WTC11 (cell line): ENCODE measurements at regions of chr12 and their contacts with region 1.

Region 1: GRCh38 chr12:6195665-6196535 is 4.3 kb upstream of the CD9 start:
- DNase-seq: peak; percentile 95
- ATAC-seq: peak; percentile 60
- H3K4me3 Mint-ChIP-seq: no peak overlapping the region
- H3K27ac Mint-ChIP-seq: peak overlapping the region; percentile 79
- H3K4me1 Mint-ChIP-seq: peaks cover 63% of the 10 kb centered on the region
- H3K27me3 Mint-ChIP-seq: peaks cover 7% of the 10 kb centered on the region; the same call in 1 of the 2 replicates
- CTCF ChIP-seq: peak; percentile 99

Region 2: DNA sequence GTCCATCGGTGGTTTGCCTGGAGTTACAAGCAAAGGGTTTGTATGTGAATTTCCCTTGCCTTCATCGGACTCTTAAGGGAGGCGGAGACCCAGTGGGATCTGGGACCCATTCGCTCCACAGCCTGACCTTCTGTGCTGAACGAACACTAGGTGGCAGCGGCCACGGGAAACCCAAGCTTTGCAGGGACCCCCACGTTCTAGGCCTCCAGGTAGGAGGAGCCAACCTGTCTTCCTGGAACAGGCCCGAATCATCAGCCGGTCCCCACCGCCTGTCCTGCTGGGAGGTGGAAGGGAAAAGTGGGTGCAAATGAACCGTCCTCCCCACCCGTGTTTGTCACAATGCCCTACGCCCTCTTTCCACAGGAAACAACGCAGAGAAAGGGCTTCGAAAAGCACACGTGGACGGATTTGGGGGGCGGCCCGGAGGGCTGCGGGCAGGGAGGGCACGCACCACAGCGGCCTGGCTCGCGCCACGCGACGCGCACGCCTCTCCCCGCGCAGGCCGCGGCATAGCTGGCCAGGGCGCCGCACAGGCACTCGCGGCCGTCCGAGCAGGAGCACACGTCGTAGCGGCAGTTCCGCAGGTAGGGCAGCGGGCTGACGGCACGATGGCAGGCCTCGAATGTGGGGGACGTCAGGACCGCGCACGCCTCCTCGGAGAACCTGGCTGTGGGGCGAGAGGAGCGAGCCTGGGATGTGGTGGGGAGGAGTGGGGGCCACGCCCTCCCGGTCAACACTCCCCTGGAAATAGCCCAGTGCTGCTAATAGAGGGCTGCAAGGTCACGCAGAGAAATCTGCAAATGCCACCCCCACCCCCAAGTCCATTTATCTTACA is 139.3 kb before region 1 on chr12:
- CTCF ChIA-PET with region 1: interaction called, 19 read pairs
- POLR2A ChIA-PET with region 1: interaction called, 4 read pairs
- DNase-seq: peak; percentile 70
- ATAC-seq: peak; percentile 79
- H3K4me3 Mint-ChIP-seq: peak overlapping the region; percentile 59
- H3K27ac Mint-ChIP-seq: no peak overlapping the region
- H3K4me1 Mint-ChIP-seq: peaks cover 29% of the 10 kb centered on the region
- H3K27me3 Mint-ChIP-seq: peaks cover 6% of the 10 kb centered on the region
- CTCF ChIP-seq: no peak

Region 3: GRCh38 chr12:6116175-6117021 is 79.5 kb before region 1 on chr12:
- CTCF ChIA-PET with region 1: no interaction called
- POLR2A ChIA-PET with region 1: no interaction called
- DNase-seq: no peak
- ATAC-seq: peak; percentile 32; the same call in 1 of the 2 replicates
- H3K4me3 Mint-ChIP-seq: no peak overlapping the region
- H3K27ac Mint-ChIP-seq: no peak overlapping the region
- H3K4me1 Mint-ChIP-seq: 0 out of 2 replicates have a peak, but pooled peaks cover 3% of the 10 kb centered on the region
- H3K27me3 Mint-ChIP-seq: no peaks in the 10 kb centered on the region; the same call in 1 of the 2 replicates
- CTCF ChIP-seq: no peak

Region 4: DNA sequence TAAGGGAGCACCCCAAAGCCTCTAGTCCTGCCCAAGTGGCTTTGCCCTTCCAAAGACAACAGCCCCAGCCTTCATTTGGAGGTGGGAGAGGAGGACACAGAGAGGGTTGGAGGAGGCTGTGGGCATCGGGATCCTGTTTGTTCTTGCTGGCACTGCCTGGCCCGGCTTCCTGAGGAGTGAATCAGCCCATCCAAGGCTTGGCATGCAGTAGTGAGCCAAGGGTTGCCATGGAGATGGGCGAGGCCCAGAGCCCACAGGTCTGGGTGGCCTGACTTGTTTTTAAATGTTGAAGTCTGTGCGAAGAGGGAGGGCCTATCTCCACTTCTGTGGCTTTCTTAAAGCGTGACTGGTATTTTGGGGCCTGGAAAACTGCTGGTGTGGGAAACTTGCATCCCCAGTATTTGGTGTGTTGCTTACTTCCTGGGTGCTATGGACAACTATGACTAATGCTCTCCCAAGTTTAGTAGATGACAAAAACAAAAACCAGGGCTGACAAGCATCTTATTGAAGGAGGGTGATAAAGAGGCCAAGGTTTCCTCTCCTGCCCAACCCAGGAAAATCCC is 20.1 kb after region 1 on chr12:
- CTCF ChIA-PET with region 1: interaction called, 46 read pairs
- POLR2A ChIA-PET with region 1: interaction called, 13 read pairs
- DNase-seq: peak; percentile 47
- ATAC-seq: peak; percentile 11
- H3K4me3 Mint-ChIP-seq: peak overlapping the region; percentile 58
- H3K27ac Mint-ChIP-seq: peak overlapping the region; percentile 100
- H3K4me1 Mint-ChIP-seq: peaks cover 99% of the 10 kb centered on the region
- H3K27me3 Mint-ChIP-seq: no peaks in the 10 kb centered on the region
- CTCF ChIP-seq: no peak

Region 5: DNA sequence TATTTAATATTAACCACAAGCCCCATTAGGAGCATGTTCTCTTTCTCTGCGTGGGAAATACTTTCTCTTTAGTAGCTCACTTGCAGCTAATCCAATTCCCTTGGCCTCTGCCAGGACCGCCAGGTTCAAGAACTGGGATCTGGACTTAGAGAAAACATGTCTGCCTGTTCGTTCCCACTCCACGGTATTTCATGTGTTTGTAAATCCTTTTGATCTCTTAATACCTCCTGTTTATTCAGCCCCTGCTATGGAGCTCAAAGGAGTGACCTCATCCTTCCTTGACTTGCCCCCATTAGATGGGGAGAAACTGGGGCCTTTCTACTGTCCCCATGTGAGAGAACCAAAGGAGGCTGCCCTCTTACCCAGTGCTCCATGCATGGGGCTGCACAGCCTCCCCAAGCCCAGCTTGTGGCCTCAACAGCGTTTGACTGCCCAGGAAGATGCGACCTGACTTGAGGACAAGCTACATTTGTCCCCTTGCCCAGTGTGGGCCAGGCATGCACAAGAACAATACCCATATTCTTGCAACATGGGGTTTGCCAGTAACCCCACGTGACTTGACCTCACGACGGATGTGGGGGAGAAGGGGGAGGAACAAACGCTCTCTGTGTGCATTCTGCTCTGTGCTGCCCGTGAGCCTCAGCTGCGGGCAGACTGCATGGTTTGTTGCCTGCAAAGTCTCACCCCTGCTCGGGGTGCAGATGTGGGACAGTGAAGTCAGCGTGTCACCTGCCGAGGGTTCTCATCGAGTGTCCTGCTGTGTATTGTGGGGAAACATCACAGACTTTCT is 34.6 kb after region 1 on chr12:
- CTCF ChIA-PET with region 1: interaction called, 36 read pairs
- POLR2A ChIA-PET with region 1: no interaction called
- DNase-seq: no peak
- ATAC-seq: no peak
- H3K4me3 Mint-ChIP-seq: no peak overlapping the region
- H3K27ac Mint-ChIP-seq: peak overlapping the region; percentile 92
- H3K4me1 Mint-ChIP-seq: peaks cover 39% of the 10 kb centered on the region
- H3K27me3 Mint-ChIP-seq: no peaks in the 10 kb centered on the region
- CTCF ChIP-seq: no peak

Region 6: DNA sequence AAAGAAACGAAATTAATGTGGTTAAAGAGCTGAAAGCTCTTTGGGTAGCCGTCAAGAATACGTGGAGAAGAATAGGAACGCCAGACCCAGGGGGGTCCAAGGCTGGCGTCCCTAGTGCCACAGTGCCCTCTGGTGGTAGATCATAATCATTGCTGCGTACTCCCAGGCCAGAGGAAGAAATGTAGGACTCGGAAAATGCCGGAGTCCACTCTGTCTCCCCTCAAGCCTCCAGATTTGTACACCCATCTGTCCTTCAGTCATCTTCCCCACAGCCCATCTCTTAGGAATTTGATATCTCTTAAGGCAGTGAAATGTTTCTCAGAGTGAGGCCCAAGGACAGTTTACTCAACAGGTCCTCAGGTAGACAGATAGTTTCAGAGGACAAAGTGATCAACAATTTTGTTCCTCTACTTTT is 89.2 kb after region 1 on chr12:
- CTCF ChIA-PET with region 1: interaction called, 431 read pairs
- POLR2A ChIA-PET with region 1: interaction called, 5 read pairs
- DNase-seq: peak; percentile 73
- ATAC-seq: peak; percentile 88
- H3K4me3 Mint-ChIP-seq: no peak overlapping the region
- H3K27ac Mint-ChIP-seq: no peak overlapping the region
- H3K4me1 Mint-ChIP-seq: peaks cover 20% of the 10 kb centered on the region
- H3K27me3 Mint-ChIP-seq: peaks cover 5% of the 10 kb centered on the region
- CTCF ChIP-seq: peak; percentile 95